ENCODE measurements at regions of chr5 and their contacts with region 1.

Region 1: DNA sequence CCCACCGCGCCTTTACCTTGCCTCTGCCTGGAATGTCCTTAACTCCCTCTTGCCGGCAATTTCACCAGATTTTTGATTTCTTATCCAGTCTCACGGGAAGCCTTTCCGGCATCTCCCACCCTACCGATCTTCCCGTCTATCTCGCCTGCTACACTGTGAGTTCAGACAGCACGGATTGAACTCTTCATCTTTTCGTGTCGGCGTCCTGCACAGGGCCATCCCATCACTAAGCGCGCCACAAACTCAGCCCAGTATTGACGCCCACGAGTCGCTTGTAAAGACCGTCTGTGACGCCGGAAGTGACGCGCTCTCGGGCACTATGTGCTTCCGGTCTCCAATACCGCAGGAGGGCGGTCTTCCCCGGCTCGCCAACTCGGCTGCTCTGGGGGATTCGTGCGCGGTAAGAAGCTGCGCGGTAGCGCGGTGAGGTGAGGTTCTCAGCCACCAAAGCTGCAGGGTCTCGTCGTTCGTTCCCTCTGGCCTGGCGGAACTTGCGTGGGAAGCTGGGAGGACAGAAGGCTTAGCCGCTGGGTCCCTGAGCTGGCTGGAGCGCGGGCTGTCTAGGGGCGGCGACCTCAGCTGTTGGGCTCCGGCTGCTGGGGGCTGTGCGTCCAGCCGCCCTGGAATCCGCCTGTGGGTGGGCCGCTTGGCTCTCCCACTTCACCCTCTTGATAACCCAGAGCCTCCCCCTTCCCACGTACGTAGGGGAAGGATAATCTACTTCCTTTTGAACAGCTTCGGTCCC is at the start of gene ZCCHC9:
- DNase-seq: peak; percentile 89
- H3K4me3 Mint-ChIP-seq: peak within 1 kb of the TSS; percentile 97
- H3K27ac Mint-ChIP-seq: peak within 1 kb of the TSS; percentile 98
- H3K4me1 Mint-ChIP-seq: peaks cover 32% of the 10 kb centered on the region
- H3K27me3 Mint-ChIP-seq: no peaks in the 10 kb centered on the region
- total RNA-seq, gene ZCCHC9: 41.7 and 47.3 TPM in 2 replicates

Region 2: DNA sequence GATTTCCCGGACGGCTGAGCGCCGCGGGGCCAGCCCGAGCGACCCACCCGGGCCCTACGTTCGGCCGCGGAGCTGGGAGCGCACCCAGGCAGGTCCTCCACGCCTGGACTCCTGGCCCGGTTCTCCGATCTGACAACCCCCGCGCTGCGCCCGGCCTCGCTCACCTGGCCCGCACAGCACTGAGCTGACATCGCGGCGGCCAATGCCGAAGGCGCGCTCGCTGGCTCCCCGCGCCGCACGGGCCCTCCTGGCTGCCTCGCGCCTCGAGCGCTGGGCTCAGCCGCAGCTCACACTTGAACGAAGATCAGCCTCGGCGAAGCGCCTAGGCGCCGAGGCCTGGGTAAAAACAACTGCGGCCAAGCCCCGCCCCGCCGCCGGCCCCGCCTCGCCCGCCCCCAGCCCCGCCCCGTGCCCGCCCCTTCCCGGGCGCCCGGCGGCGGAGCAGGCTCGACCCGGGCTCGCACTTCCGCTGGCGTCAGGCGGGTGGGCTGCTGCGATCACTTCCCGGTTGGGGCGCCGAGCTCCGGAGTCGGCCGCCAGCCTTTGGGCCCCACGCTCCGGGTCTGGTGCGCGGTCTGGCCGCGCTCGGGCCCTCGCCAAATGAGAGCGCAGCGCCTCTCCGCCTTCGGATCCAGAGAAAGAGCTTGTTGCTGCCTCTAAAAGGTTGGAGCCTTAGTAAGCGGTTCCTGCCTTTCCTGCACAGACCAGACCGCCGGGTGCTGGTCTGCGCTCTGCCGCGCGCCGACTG is 1045.5 kb before region 1 on chr5 and contains the start of gene SERINC5:
- intact Hi-C with region 1: loop called (anchors 5 kb)
- DNase-seq: peak; percentile 83
- H3K4me3 Mint-ChIP-seq: peak within 1 kb of the TSS; percentile 96
- H3K27ac Mint-ChIP-seq: peak within 1 kb of the TSS; percentile 99
- H3K4me1 Mint-ChIP-seq: peaks cover 51% of the 10 kb centered on the region
- H3K27me3 Mint-ChIP-seq: no peaks in the 10 kb centered on the region
- total RNA-seq, gene SERINC5: 21.2 and 22.8 TPM in 2 replicates

Region 3: GRCh38 chr5:80754900-80755299 is 546.5 kb before region 1 on chr5:
- intact Hi-C with region 1: loop called (anchors 5 kb)
- DNase-seq: peak; percentile 16
- H3K4me3 Mint-ChIP-seq: peak overlapping the region; percentile 68
- H3K27ac Mint-ChIP-seq: peak overlapping the region; percentile 97
- H3K4me1 Mint-ChIP-seq: peaks cover 58% of the 10 kb centered on the region
- H3K27me3 Mint-ChIP-seq: no peaks in the 10 kb centered on the region

Region 4: DNA sequence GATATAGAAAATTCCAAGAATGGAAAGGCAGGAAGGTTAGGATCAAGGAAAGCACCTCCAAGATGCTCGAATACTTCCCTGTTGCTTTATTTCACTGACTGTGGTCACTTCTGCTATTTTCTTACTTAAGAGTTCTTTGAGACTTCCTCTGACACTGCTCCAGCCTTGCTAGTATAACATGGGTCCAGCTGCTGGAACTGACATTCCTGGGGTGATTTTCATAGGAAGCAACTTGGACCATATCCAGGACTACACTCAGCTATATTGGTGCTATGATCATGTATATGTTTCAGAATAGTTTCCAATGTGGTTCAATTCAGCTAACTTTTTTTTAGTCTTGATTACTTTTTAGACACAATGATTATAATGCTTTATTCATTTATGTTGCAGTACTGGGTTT is 149.9 kb before region 1 on chr5:
- intact Hi-C with region 1: no loop called
- DNase-seq: no peak
- H3K4me3 Mint-ChIP-seq: no peak overlapping the region
- H3K27ac Mint-ChIP-seq: no peak overlapping the region
- H3K4me1 Mint-ChIP-seq: peaks cover 18% of the 10 kb centered on the region
- H3K27me3 Mint-ChIP-seq: no peaks in the 10 kb centered on the region

Region 5: DNA sequence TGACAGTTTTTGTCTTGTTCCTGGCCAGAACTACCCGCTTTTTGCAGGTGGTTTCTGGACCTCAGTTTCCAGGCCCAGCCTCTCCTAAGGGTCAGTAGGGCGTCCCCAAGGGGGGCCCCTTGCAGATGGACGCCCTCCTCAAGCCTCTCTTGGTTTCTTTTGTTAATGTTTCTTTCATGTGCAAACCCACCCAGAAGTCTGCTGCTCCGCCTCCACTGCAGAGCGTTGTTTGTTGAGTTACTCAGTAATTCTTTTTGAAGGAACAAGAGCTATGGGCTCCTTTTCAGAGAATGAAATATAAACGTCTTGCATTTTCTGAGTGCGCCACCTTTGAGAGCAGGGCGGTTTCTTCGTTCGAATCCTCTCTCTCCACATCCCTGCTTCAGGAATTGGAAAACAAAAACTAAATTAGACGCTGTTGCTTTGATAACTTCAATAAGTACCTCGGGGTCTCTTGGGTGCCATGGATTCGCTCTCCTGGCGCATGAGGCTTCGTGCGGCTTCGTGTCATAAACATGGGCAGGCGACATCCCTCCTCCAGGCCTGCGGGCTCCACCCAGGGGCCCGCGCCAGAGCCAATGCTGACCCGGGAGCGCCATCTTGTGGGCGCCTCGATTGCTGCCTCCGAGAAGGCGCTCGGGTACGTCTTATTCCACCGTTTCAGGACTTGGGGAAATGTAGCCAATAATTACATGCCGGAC is 106.7 kb before region 1 on chr5:
- intact Hi-C with region 1: loop called (anchors 1 kb)
- DNase-seq: peak; percentile 72
- H3K4me3 Mint-ChIP-seq: no peak overlapping the region
- H3K27ac Mint-ChIP-seq: peak overlapping the region; percentile 34
- H3K4me1 Mint-ChIP-seq: peaks cover 17% of the 10 kb centered on the region
- H3K27me3 Mint-ChIP-seq: peaks cover 3% of the 10 kb centered on the region

Region 6: GRCh38 chr5:81544351-81545018 is 243.0 kb after region 1 on chr5:
- intact Hi-C with region 1: no loop called
- DNase-seq: no peak
- H3K4me3 Mint-ChIP-seq: no peak overlapping the region
- H3K27ac Mint-ChIP-seq: no peak overlapping the region
- H3K4me1 Mint-ChIP-seq: no peaks in the 10 kb centered on the region
- H3K27me3 Mint-ChIP-seq: no peaks in the 10 kb centered on the region

Region 7: DNA sequence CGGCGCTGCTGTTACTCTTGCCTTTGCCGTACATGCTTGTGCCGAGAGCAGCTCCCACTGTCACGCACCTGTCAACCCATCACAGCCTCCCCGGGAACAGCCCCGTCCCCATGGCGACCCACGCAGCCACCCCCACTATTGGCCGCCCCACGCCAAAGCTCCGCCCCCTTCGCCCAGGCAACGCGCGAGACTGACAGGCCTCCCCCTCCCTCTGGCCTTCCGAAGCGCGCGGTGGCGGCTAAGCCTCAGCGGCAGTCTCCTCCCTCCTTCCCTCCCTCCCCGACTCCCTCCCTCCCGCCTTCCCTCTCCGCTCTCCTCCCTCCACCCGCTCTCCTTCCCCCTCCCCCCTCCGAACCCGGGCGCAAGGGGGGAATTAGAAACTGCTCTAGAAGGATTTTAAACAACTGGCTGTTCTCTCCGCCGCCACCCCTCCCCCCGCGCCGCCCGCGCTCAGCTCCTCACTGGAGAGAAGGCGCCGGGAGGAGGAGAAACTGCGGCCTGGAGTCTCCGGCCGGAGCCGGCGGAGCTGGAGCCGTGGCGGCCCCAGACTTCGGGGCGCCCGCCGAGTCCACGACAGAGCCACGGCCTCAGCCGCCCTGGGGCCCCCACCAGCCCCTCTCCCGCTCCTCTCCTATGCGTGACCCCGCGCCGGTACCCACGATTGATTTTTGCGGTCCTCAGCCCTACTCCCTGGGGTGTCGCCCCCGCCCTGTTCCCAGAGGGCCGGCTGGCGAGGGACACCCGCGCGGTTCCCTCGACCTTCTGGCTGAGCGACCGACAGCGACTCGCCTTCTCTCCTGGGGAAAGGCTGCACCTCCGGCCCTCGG is 449.8 kb after region 1 on chr5 and contains the start of gene SSBP2:
- intact Hi-C with region 1: loop called (anchors 1 kb)
- DNase-seq: peak; percentile 98
- H3K4me3 Mint-ChIP-seq: peak within 1 kb of the TSS; percentile 91
- H3K27ac Mint-ChIP-seq: peak within 1 kb of the TSS; percentile 92
- H3K4me1 Mint-ChIP-seq: peaks cover 27% of the 10 kb centered on the region
- H3K27me3 Mint-ChIP-seq: peaks cover 9% of the 10 kb centered on the region
- total RNA-seq, gene SSBP2: 8.4 and 12.7 TPM in 2 replicates

Region 8: GRCh38 chr5:82225525-82226172 is 924.2 kb after region 1 on chr5:
- intact Hi-C with region 1: loop called (anchors 2 kb)
- DNase-seq: peak; percentile 55
- H3K4me3 Mint-ChIP-seq: no peak overlapping the region
- H3K27ac Mint-ChIP-seq: no peak overlapping the region
- H3K4me1 Mint-ChIP-seq: no peaks in the 10 kb centered on the region
- H3K27me3 Mint-ChIP-seq: no peaks in the 10 kb centered on the region

Measured in activated T-helper 1 cell treated with anti-CD3 and anti-CD28 coated beads, Interleukin-12 subunit alpha, Interleukin-12 subunit beta, Interleukin-2, Interleukin-4 antibody, amounts not matched to agents 30 ng/mL and 10 ng/mL and 1 ng/mL, durations not matched to agents 14 hours and 24 hours and 36 hours (primary cell).